ENCODE measurements at regions of chr16 and their contacts with region 1.

Region 1: GRCh38 chr16:27109666-27110523 is 43.2 kb downstream of the C16orf82 start:
- DNase-seq: peak; percentile 44 to 73 (median 66)
- H3K4me3 ChIP-seq: peak overlapping the region in 2 of 4 donors; percentile 5 to 38
- H3K27ac ChIP-seq: peak overlapping the region in 2 of 5 donors; percentile 5 to 41
- H3K4me1 ChIP-seq: no peaks in the 10 kb centered on the region
- H3K27me3 ChIP-seq: peaks cover 3% of the 10 kb centered on the region
- CTCF ChIP-seq: peak; percentile 41 to 99 (median 71)
- POLR2A ChIP-seq: no peak

Region 2: DNA sequence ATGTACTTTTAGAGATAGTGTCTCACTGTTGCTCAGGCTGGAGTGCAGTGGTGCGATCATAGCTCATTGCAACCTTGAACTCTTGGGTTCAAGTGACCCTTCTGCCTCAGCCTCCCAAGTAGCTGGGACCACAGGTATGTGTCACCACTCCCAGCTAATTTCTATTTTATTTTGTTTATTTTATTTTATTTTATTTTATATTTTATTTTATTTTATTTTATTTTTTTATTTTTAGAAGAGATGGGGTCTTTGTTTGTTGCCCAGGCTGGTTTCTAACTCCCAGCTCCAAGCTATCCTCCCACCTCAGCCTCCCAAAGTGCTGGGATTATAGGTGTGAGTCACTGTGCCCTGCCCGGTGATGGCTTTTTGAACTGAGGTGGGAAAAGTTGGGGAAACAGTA is 1453.3 kb before region 1 on chr16:
- intact Hi-C with region 1: no loop called
- DNase-seq: no peak
- H3K4me3 ChIP-seq: no peak overlapping the region
- H3K27ac ChIP-seq: no peak overlapping the region
- H3K4me1 ChIP-seq: no peaks in the 10 kb centered on the region
- H3K27me3 ChIP-seq: no peaks in the 10 kb centered on the region
- CTCF ChIP-seq: no peak
- POLR2A ChIP-seq: no peak

Region 3: GRCh38 chr16:25841761-25842160 is 1268.1 kb before region 1 on chr16:
- intact Hi-C with region 1: loop called in 1 of 2 experiments (anchors 5 kb)
- DNase-seq: no peak
- H3K4me3 ChIP-seq: no peak overlapping the region
- H3K27ac ChIP-seq: no peak overlapping the region
- H3K4me1 ChIP-seq: no peaks in the 10 kb centered on the region
- H3K27me3 ChIP-seq: peaks cover 9% of the 10 kb centered on the region
- CTCF ChIP-seq: no peak
- POLR2A ChIP-seq: no peak

Region 4: GRCh38 chr16:26963114-26963513 is 146.8 kb before region 1 on chr16:
- intact Hi-C with region 1: loop called in 1 of 2 experiments (anchors 5 kb)
- DNase-seq: peak; percentile 15 to 57 (median 48)
- H3K4me3 ChIP-seq: no peak overlapping the region
- H3K27ac ChIP-seq: no peak overlapping the region
- H3K4me1 ChIP-seq: no peaks in the 10 kb centered on the region
- H3K27me3 ChIP-seq: no peaks in the 10 kb centered on the region
- CTCF ChIP-seq: peak; percentile 23 to 49 (median 35)
- POLR2A ChIP-seq: no peak

Region 5: GRCh38 chr16:27052007-27052406 is 57.9 kb before region 1 on chr16:
- intact Hi-C with region 1: no loop called
- DNase-seq: no peak
- H3K4me3 ChIP-seq: no peak overlapping the region
- H3K27ac ChIP-seq: no peak overlapping the region
- H3K4me1 ChIP-seq: no peaks in the 10 kb centered on the region
- H3K27me3 ChIP-seq: no peaks in the 10 kb centered on the region
- CTCF ChIP-seq: no peak
- POLR2A ChIP-seq: no peak